GM13976 (cell line): ENCODE measurements at regions of chrX and their contacts with region 1.

Region 1: DNA sequence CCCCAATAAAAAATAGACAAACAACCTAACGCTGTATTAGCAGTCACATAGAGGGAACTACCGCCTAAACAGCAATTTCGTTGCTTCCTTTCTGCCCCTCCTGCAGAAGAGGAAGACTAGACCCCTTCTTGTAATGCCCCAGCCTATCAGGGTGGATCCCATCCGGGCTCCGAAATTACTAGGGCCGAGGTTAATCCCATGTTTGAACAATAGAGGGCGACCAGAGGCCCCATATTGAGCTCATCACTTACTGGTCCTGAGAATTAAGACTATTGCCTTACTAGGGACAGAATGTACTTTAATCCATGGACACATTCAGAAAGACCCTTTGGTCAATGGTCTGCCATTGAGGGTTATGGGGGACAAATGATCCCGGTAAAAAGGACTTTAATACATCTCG is 11.8 kb upstream of the ZNF630 start:
- DNase-seq: peak; percentile 50
- CTCF ChIP-seq: peak; percentile 35

Region 2: GRCh38 chrX:47918274-47918673 is 164.9 kb before region 1 on chrX:
- in situ Hi-C with region 1: no loop called
- DNase-seq: no peak
- CTCF ChIP-seq: no peak

Region 3: GRCh38 chrX:47991263-47992092 is 91.7 kb before region 1 on chrX:
- in situ Hi-C with region 1: loop called (anchors 25 kb)
- DNase-seq: no peak
- CTCF ChIP-seq: no peak

Region 4: GRCh38 chrX:48153769-48154168 is 70.6 kb after region 1 on chrX:
- in situ Hi-C with region 1: no loop called
- DNase-seq: no peak
- CTCF ChIP-seq: no peak

Region 5: GRCh38 chrX:48196745-48197201 is 113.6 kb after region 1 on chrX and contains the start of gene SSX5:
- in situ Hi-C with region 1: no loop called
- DNase-seq: no peak
- CTCF ChIP-seq: no peak

Region 6: GRCh38 chrX:48468693-48469691 is 385.8 kb after region 1 on chrX:
- in situ Hi-C with region 1: loop called (anchors 25 kb)
- DNase-seq: peak; percentile 62
- CTCF ChIP-seq: peak; percentile 18